CD4-positive, alpha-beta T cell (primary cell): ENCODE measurements at regions of chr3 and their contacts with region 1.

Region 1: GRCh38 chr3:71428841-71429596 is 154.5 kb downstream of the FOXP1 start:
- DNase-seq: peak in 3 of 14 experiments; percentile 37 to 54 (median 41)
- ATAC-seq: peak; percentile 19
- H3K4me3 ChIP-seq: no peak overlapping the region
- H3K4me3 Mint-ChIP-seq: peak overlapping the region; percentile 67
- H3K27ac ChIP-seq: peak overlapping the region in 1 of 2 donors; percentile 42
- H3K27ac Mint-ChIP-seq: peak overlapping the region; percentile 91
- H3K4me1 ChIP-seq: peaks cover 72% of the 10 kb centered on the region
- H3K4me1 Mint-ChIP-seq: peaks cover 97% of the 10 kb centered on the region
- H3K27me3 ChIP-seq: no peaks in the 10 kb centered on the region
- H3K27me3 Mint-ChIP-seq: no peaks in the 10 kb centered on the region
- CTCF ChIP-seq: no peak

Region 2: DNA sequence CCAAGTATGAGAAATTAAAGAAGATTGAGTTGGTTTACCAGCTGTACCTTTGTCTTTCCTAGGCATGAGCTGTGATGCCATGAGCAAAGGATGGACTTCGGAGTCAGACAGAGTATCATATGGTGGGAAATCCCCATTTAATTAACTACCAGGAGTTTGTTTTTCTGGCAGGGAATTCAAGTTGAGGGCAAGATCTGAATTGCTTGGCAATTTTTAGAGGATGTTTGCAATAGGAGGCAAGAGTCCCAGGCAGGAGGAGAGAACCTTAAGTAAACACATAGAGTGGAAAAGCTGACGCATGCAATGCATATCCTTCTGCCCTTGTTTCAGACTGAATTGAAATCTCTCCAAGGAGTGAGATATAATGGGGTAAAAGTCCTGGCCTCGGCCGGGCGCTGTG is 546.9 kb before region 1 on chr3:
- CTCF ChIA-PET with region 1: no interaction called
- POLR2A ChIA-PET with region 1: no interaction called
- intact Hi-C with region 1: no loop called
- DNase-seq: no peak
- ATAC-seq: no peak
- H3K4me3 ChIP-seq: no peak overlapping the region
- H3K4me3 Mint-ChIP-seq: no peak overlapping the region
- H3K27ac ChIP-seq: no peak overlapping the region
- H3K27ac Mint-ChIP-seq: no peak overlapping the region
- H3K4me1 ChIP-seq: no peaks in the 10 kb centered on the region
- H3K4me1 Mint-ChIP-seq: no peaks in the 10 kb centered on the region
- H3K27me3 ChIP-seq: no peaks in the 10 kb centered on the region
- H3K27me3 Mint-ChIP-seq: peaks cover 11% of the 10 kb centered on the region
- CTCF ChIP-seq: no peak

Region 3: GRCh38 chr3:71369701-71370391 is 59.2 kb before region 1 on chr3:
- CTCF ChIA-PET with region 1: no interaction called
- POLR2A ChIA-PET with region 1: interaction called, 6 read pairs
- intact Hi-C with region 1: loop called in 1 of 2 experiments (anchors 2 kb)
- DNase-seq: no peak
- ATAC-seq: no peak
- H3K4me3 ChIP-seq: no peak overlapping the region
- H3K4me3 Mint-ChIP-seq: no peak overlapping the region
- H3K27ac ChIP-seq: no peak overlapping the region
- H3K27ac Mint-ChIP-seq: peak overlapping the region; percentile 87
- H3K4me1 ChIP-seq: peaks cover 41% of the 10 kb centered on the region
- H3K4me1 Mint-ChIP-seq: peaks cover 82% of the 10 kb centered on the region
- H3K27me3 ChIP-seq: no peaks in the 10 kb centered on the region
- H3K27me3 Mint-ChIP-seq: no peaks in the 10 kb centered on the region
- CTCF ChIP-seq: no peak

Region 4: GRCh38 chr3:71389911-71390573 is 39.0 kb before region 1 on chr3:
- CTCF ChIA-PET with region 1: no interaction called
- POLR2A ChIA-PET with region 1: interaction called, 4 read pairs
- intact Hi-C with region 1: loop called in 1 of 2 experiments (anchors 5 kb)
- DNase-seq: peak in 11 of 14 experiments; percentile 10 to 63 (median 38)
- ATAC-seq: peak; percentile 58
- H3K4me3 ChIP-seq: peak overlapping the region; percentile 33
- H3K4me3 Mint-ChIP-seq: peak overlapping the region; percentile 87
- H3K27ac ChIP-seq: peak overlapping the region; percentile 27 to 84
- H3K27ac Mint-ChIP-seq: peak overlapping the region; percentile 100
- H3K4me1 ChIP-seq: peaks cover 35% of the 10 kb centered on the region
- H3K4me1 Mint-ChIP-seq: peaks cover 81% of the 10 kb centered on the region
- H3K27me3 ChIP-seq: no peaks in the 10 kb centered on the region
- H3K27me3 Mint-ChIP-seq: no peaks in the 10 kb centered on the region
- CTCF ChIP-seq: no peak

Region 5: GRCh38 chr3:71416876-71417275 is 12.1 kb before region 1 on chr3:
- CTCF ChIA-PET with region 1: interaction called, 4 read pairs
- POLR2A ChIA-PET with region 1: interaction called, 20 read pairs
- intact Hi-C with region 1: loop called in 1 of 2 experiments (anchors 1 kb)
- DNase-seq: peak in 8 of 14 experiments; percentile 12 to 75 (median 52)
- ATAC-seq: peak; percentile 68
- H3K4me3 ChIP-seq: no peak overlapping the region
- H3K4me3 Mint-ChIP-seq: peak overlapping the region; percentile 70
- H3K27ac ChIP-seq: peak overlapping the region in 1 of 2 donors; percentile 42
- H3K27ac Mint-ChIP-seq: peak overlapping the region; percentile 91
- H3K4me1 ChIP-seq: peaks cover 45% of the 10 kb centered on the region
- H3K4me1 Mint-ChIP-seq: peaks cover 94% of the 10 kb centered on the region
- H3K27me3 ChIP-seq: no peaks in the 10 kb centered on the region
- H3K27me3 Mint-ChIP-seq: no peaks in the 10 kb centered on the region
- CTCF ChIP-seq: peak; percentile 40

Region 6: DNA sequence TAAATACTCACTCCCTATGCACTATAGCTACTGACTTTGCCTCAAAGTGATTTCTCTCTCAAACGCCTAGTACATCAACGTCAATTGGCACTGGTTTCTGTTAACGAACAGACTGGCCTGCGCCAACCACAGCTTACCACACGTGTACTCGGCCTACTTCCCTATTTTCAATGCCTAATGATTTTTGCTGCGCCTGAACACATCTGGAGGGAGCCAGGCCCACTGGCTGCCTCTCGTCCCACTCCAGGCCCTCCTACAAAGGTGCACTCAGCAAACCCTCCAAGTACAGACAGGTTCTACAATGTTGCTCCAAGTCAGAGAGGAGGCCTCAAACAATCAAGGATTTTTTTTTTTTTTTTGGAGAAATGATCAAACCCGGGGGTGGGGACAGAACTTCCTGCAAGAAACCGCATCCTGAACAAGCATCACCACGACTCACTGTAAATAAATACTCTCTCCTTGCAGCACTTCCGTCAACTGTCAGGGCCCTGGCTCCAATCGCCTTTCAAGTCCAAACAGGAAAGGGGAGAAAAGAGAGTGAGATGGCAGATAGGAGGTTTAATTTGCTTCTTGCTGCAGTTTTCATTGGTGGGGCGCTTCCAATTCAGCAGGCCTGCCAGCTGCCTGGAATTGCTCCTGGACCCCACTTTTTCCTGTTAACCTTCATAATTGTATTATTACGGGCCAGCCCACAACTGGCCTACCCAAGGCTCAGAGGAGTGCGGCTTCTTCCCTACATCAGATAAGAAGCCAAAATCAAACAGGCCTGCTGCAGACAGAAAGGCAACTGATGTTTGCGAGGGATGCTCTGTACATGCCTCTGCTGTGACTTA is 15.2 kb after region 1 on chr3:
- CTCF ChIA-PET with region 1: interaction called, 3 read pairs
- POLR2A ChIA-PET with region 1: interaction called, 79 read pairs
- intact Hi-C with region 1: loop called in 1 of 2 experiments (anchors 1 kb)
- DNase-seq: peak; percentile 53 to 95 (median 68)
- ATAC-seq: peak; percentile 78
- H3K4me3 ChIP-seq: no peak overlapping the region
- H3K4me3 Mint-ChIP-seq: peak overlapping the region; percentile 79
- H3K27ac ChIP-seq: peak overlapping the region; percentile 67 to 82
- H3K27ac Mint-ChIP-seq: peak overlapping the region; percentile 94
- H3K4me1 ChIP-seq: peaks cover 97% of the 10 kb centered on the region
- H3K4me1 Mint-ChIP-seq: peaks cover 97% of the 10 kb centered on the region
- H3K27me3 ChIP-seq: no peaks in the 10 kb centered on the region
- H3K27me3 Mint-ChIP-seq: no peaks in the 10 kb centered on the region
- CTCF ChIP-seq: no peak

Region 7: DNA sequence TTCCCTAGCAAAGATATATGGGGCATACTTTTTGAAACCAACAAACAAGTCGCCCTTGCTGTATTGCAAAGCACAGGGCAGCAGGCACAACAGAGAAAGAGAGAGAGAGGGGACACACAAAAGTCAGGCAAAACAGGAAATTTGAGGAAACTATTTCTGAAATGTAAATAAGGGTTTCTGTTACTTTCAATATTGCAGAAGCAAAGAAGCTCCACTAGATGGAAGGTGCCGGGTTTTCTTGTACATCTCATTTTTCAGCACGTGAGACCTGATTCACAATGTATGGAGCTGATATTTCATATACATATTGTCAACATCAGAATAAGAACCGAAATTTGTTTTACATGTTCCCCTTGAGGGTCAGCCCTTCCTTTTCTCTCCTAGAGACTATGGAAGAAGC is 27.1 kb after region 1 on chr3:
- CTCF ChIA-PET with region 1: no interaction called
- POLR2A ChIA-PET with region 1: interaction called, 16 read pairs
- intact Hi-C with region 1: no loop called
- DNase-seq: peak in 4 of 14 experiments; percentile 49 to 64 (median 63)
- ATAC-seq: peak; percentile 37
- H3K4me3 ChIP-seq: peak overlapping the region; percentile 25
- H3K4me3 Mint-ChIP-seq: peak overlapping the region; percentile 78
- H3K27ac ChIP-seq: peak overlapping the region; percentile 72 to 78
- H3K27ac Mint-ChIP-seq: peak overlapping the region; percentile 94
- H3K4me1 ChIP-seq: peaks cover 54% of the 10 kb centered on the region
- H3K4me1 Mint-ChIP-seq: peaks cover 95% of the 10 kb centered on the region
- H3K27me3 ChIP-seq: no peaks in the 10 kb centered on the region
- H3K27me3 Mint-ChIP-seq: no peaks in the 10 kb centered on the region
- CTCF ChIP-seq: peak; percentile 46

Region 8: GRCh38 chr3:71461749-71462465 is 32.9 kb after region 1 on chr3:
- CTCF ChIA-PET with region 1: no interaction called
- POLR2A ChIA-PET with region 1: interaction called, 16 read pairs
- intact Hi-C with region 1: no loop called
- DNase-seq: no peak
- ATAC-seq: no peak
- H3K4me3 ChIP-seq: no peak overlapping the region
- H3K4me3 Mint-ChIP-seq: peak overlapping the region; percentile 49
- H3K27ac ChIP-seq: peak overlapping the region in 1 of 2 donors; percentile 2
- H3K27ac Mint-ChIP-seq: peak overlapping the region; percentile 94
- H3K4me1 ChIP-seq: peaks cover 35% of the 10 kb centered on the region
- H3K4me1 Mint-ChIP-seq: peaks cover 87% of the 10 kb centered on the region
- H3K27me3 ChIP-seq: no peaks in the 10 kb centered on the region
- H3K27me3 Mint-ChIP-seq: no peaks in the 10 kb centered on the region
- CTCF ChIP-seq: no peak

Region 9: DNA sequence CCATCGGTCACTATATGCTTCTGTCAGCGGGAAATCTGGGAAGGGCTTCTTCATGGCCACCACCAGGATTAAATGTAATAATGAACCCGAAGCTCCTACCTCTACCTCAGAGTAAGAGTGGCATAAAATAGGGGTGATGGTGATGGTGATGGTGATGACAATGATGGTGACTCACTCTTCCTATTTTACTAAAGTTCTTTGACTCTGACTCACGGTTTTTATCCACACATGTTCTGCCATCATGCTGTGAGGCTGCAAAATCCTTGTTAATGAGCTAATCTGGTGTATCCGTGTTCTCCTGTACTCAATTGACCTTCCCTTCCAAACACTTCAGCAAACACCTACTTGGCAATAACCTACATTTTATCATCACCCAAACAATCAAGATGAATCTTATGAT is 172.8 kb after region 1 on chr3:
- CTCF ChIA-PET with region 1: no interaction called
- POLR2A ChIA-PET with region 1: no interaction called
- intact Hi-C with region 1: no loop called
- DNase-seq: no peak
- ATAC-seq: no peak
- H3K4me3 ChIP-seq: no peak overlapping the region
- H3K4me3 Mint-ChIP-seq: no peak overlapping the region
- H3K27ac ChIP-seq: no peak overlapping the region
- H3K27ac Mint-ChIP-seq: no peak overlapping the region
- H3K4me1 ChIP-seq: no peaks in the 10 kb centered on the region
- H3K4me1 Mint-ChIP-seq: peaks cover 26% of the 10 kb centered on the region
- H3K27me3 ChIP-seq: no peaks in the 10 kb centered on the region
- H3K27me3 Mint-ChIP-seq: no peaks in the 10 kb centered on the region
- CTCF ChIP-seq: no peak